ENCODE measurements at regions of chr18 and their contacts with region 1.

Region 1: DNA sequence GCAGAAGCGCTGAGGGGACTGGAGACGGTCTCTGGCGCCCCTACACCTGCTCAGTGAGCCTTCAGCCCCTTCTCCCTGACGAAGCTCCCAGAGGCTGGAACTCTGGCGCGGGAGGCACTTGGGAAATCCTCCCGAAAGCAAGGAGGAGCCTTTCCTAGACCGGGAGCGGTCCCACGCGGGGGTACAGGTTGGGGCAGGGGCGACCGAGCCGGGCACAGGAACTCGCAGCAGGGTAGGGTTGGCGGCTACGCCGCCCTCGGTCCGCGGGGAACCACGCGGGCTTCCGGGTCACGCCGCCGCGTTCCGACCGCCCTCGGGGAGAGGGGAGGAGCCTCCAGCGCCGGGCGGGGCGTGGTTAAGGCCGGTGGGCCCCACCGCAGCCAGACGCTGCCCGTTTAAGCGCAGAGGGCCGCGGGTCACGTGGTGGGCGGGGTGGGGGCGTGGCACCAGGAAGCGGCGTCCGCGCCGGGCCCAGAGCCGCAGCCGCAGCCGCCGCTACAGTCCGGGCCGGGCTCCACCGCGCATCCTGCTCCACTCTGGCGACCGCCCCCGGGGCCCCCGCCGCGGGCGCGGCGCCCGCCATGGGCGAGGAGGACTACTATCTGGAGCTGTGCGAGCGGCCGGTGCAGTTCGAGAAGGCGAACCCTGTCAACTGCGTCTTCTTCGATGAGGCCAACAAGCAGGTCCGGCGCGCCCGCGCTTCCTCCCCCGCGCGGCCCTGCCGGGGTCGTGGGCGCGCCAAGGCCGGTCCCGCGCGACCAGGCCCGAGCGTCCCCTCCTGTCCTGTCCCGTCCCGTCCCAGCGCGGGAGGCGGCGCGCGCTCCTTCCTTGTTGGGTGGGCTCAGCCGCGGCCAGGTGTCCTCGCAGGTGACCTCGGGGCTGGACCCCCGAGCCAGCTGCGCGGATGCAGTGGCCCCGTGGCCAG is at the start of gene RMC1:
- DNase-seq: peak; percentile 94 to 96 (median 95)
- H3K4me3 ChIP-seq: peak within 1 kb of the TSS; percentile 84 to 85
- H3K4me3 Mint-ChIP-seq: peak within 1 kb of the TSS; percentile 89 to 97 (median 94)
- H3K27ac ChIP-seq: peak within 1 kb of the TSS; percentile 82
- H3K27ac Mint-ChIP-seq: peak within 1 kb of the TSS; percentile 91 to 98 (median 96)
- H3K4me1 ChIP-seq: peaks cover 48% of the 10 kb centered on the region
- H3K4me1 Mint-ChIP-seq: peaks cover 32 to 71% (median 50%) of the 10 kb centered on the region in 4 donors
- H3K27me3 ChIP-seq: no peaks in the 10 kb centered on the region
- H3K27me3 Mint-ChIP-seq: no peaks in the 10 kb centered on the region
- total RNA-seq, gene RMC1: 56.6 TPM

Region 2: DNA sequence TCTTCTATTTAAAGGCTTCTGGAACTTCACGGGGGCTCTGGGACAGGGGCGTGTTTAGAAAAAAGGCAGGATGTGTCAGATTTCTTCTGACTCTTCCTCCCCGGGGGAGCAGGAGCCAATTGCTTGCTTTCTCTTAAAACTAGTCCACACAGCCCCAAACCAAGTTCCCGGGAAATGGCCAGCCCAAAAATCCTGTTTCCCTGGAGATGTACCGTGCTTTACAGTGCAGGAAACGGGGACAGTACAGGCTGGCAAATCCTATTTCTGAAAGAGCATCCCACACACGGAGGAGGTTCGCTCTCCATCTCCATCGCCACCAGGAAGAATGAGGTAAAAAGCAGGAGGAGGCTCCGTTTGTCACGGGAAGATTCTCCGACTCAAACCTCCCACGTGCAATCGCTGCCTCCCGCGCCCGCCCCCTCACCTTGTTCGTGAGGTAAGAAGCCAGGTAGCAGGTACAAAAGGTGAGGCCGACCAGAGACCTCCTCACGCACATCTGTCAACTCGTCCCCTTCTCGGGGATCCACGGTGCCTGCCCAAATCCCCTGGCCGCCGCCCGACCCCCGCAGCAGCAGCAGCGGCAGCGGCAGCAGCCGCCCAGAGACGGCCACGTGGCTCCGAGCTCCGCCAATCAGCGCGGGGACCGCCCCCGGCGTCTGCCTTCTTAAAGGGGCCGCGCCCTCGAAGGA is 65.8 kb before region 1 on chr18:
- CTCF ChIA-PET with region 1: no interaction called
- POLR2A ChIA-PET with region 1: no interaction called
- intact Hi-C with region 1: loop called (anchors 1 kb)
- DNase-seq: peak; percentile 61 to 77 (median 67)
- H3K4me3 ChIP-seq: peak overlapping the region; percentile 3 to 89
- H3K4me3 Mint-ChIP-seq: peak overlapping the region; percentile 89 to 90 (median 90)
- H3K27ac ChIP-seq: peak overlapping the region; percentile 46
- H3K27ac Mint-ChIP-seq: peak overlapping the region in 6 of 7 donors; percentile 27 to 78 (median 69)
- H3K4me1 ChIP-seq: peaks cover 16% of the 10 kb centered on the region
- H3K4me1 Mint-ChIP-seq: peaks cover 7 to 16% (median 11%) of the 10 kb centered on the region in 4 donors
- H3K27me3 ChIP-seq: no peaks in the 10 kb centered on the region
- H3K27me3 Mint-ChIP-seq: peaks cover 2 to 3% of the 10 kb centered on the region in 2 donors

Region 3: GRCh38 chr18:23487738-23488570 is 15.3 kb before region 1 on chr18:
- CTCF ChIA-PET with region 1: interaction called, 23 read pairs
- POLR2A ChIA-PET with region 1: interaction called, 5 read pairs
- intact Hi-C with region 1: no loop called
- DNase-seq: peak in 3 of 5 donors; percentile 24 to 32 (median 30)
- H3K4me3 ChIP-seq: peak overlapping the region in 1 of 2 donors; percentile 11
- H3K4me3 Mint-ChIP-seq: peak overlapping the region; percentile 61 to 77 (median 72)
- H3K27ac ChIP-seq: peak overlapping the region; percentile 41
- H3K27ac Mint-ChIP-seq: peak overlapping the region; percentile 73 to 95 (median 85)
- H3K4me1 ChIP-seq: peaks cover 8% of the 10 kb centered on the region
- H3K4me1 Mint-ChIP-seq: peaks cover 7 to 20% (median 9%) of the 10 kb centered on the region in 4 donors
- H3K27me3 ChIP-seq: no peaks in the 10 kb centered on the region
- H3K27me3 Mint-ChIP-seq: no peaks in the 10 kb centered on the region

Region 4: DNA sequence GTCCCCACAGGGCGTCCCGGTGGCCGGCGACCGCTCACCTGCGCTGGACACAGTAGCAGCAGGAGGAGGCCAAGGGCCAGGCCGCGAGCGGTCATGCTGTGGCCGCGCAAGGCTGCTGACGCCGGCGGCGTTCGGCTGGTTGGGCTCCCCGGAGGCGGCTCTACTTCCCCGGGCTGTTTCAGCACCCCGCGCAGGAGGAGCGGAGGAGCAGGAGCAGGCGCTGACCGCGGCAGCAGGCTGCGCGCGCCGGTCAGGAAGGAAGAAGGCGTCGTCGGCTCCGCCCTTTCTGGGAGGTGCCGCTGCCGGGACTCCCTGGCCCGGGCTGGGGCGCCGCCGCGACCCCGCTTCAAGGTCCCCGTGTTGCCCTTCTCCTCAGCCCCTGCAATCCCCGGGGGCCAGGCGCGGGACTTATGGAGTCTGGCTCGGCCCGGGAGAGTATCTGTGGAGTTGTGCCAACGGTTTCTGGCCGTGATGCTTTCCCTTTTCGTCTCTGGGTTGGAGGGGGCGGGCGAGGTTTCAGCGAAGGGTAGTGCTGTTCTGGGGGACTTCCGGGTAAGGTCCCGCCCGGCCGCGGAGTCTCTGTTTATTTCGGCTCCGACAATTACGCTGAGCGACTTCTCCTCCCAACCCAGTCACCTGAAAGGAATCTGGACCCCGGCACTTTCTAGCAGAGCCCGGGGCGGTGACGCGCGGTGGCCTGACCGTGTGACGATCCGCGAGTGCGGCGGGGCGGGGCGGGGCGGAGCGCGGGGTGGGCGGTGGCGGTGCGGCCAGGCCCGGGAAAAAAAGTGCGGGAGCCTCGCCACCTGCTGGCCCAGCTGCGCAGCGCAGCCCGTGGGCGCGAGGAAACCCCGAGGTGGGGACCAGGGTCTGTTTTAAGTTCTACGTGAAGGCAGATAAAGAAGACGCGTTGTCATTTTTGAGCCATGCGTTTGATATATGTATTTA is 83.2 kb after region 1 on chr18 and contains the start of gene NPC1:
- CTCF ChIA-PET with region 1: interaction called, 15 read pairs
- POLR2A ChIA-PET with region 1: interaction called, 9 read pairs
- intact Hi-C with region 1: loop called (anchors 1 kb)
- DNase-seq: peak; percentile 91 to 95 (median 94)
- H3K4me3 ChIP-seq: peak within 1 kb of the TSS; percentile 77 to 87
- H3K4me3 Mint-ChIP-seq: peak within 1 kb of the TSS; percentile 87 to 96 (median 94)
- H3K27ac ChIP-seq: peak within 1 kb of the TSS; percentile 97
- H3K27ac Mint-ChIP-seq: peak within 1 kb of the TSS; percentile 95 to 98 (median 97)
- H3K4me1 ChIP-seq: peaks cover 46% of the 10 kb centered on the region
- H3K4me1 Mint-ChIP-seq: peaks cover 25 to 47% (median 37%) of the 10 kb centered on the region in 4 donors
- H3K27me3 ChIP-seq: no peaks in the 10 kb centered on the region
- H3K27me3 Mint-ChIP-seq: peaks cover 0 to 4% of the 10 kb centered on the region in 2 donors
- total RNA-seq, gene NPC1: 62.9 to 64.5 TPM

Region 5: GRCh38 chr18:23812546-23813440 is 309.5 kb after region 1 on chr18:
- CTCF ChIA-PET with region 1: interaction called, 4 read pairs
- POLR2A ChIA-PET with region 1: no interaction called
- intact Hi-C with region 1: loop called (anchors 1 kb)
- DNase-seq: peak in 4 of 5 donors; percentile 28 to 39 (median 32)
- H3K4me3 ChIP-seq: no peak overlapping the region
- H3K4me3 Mint-ChIP-seq: no peak overlapping the region
- H3K27ac ChIP-seq: no peak overlapping the region
- H3K27ac Mint-ChIP-seq: no peak overlapping the region
- H3K4me1 ChIP-seq: peaks cover 13% of the 10 kb centered on the region
- H3K4me1 Mint-ChIP-seq: peaks cover 2 to 16% (median 12%) of the 10 kb centered on the region in 4 donors
- H3K27me3 ChIP-seq: no peaks in the 10 kb centered on the region
- H3K27me3 Mint-ChIP-seq: no peaks in the 10 kb centered on the region

Region 6: DNA sequence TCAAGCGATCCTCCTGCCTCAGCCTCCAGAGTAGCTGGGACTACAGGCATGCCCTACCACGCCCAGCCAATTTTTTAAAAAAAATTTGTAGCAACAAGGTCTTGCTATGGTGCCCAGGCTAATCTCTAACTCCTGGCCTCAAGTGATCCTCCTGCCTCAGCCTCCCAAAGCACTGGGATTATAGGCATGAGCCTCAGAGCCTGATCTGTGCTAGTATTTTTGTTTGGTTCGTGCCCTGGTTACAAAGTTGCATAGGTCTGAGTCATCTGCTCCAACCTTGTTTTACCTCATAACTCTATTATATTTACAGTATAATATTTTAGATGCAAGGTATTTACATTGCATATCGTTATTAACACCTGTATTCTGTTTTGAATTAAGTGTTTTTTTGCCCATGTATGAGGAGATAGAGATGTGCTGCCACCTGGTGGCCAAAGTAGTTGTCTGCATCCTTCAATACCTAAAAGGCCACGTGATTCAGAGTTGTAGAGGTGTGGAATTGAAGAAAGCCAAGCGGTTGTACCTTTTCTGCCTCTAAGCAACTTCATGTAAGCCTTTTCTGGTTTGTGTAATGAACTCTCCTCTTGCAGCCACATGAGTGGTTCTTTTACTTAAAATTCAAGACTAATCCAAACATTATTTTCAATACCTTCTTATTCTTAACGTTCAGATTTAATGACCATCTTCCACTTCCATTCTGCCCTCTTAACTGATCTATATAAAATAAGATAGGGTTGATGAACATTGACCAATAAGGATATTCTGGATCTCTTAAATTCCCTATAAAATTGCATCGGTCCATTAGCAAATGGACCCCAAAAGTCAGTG is 615.7 kb after region 1 on chr18:
- CTCF ChIA-PET with region 1: interaction called, 3 read pairs
- POLR2A ChIA-PET with region 1: no interaction called
- intact Hi-C with region 1: loop called (anchors 1 kb)
- DNase-seq: peak; percentile 72 to 78 (median 76)
- H3K4me3 ChIP-seq: no peak overlapping the region
- H3K4me3 Mint-ChIP-seq: no peak overlapping the region
- H3K27ac ChIP-seq: no peak overlapping the region
- H3K27ac Mint-ChIP-seq: peak overlapping the region; percentile 37 to 79 (median 50)
- H3K4me1 ChIP-seq: peaks cover 16% of the 10 kb centered on the region
- H3K4me1 Mint-ChIP-seq: peaks cover 16 to 31% (median 23%) of the 10 kb centered on the region in 4 donors
- H3K27me3 ChIP-seq: no peaks in the 10 kb centered on the region
- H3K27me3 Mint-ChIP-seq: no peaks in the 10 kb centered on the region